ENCODE measurements at regions of chr21 and their contacts with region 1.

Region 1: GRCh38 chr21:28160378-28160777 is 832.3 kb downstream of the LTN1 start:
- DNase-seq: no peak
- H3K4me3 ChIP-seq: no peak overlapping the region
- H3K27ac ChIP-seq: no peak overlapping the region
- H3K4me1 ChIP-seq: no peaks in the 10 kb centered on the region
- H3K27me3 ChIP-seq: no peaks in the 10 kb centered on the region
- CTCF ChIP-seq: no peak

Region 2: DNA sequence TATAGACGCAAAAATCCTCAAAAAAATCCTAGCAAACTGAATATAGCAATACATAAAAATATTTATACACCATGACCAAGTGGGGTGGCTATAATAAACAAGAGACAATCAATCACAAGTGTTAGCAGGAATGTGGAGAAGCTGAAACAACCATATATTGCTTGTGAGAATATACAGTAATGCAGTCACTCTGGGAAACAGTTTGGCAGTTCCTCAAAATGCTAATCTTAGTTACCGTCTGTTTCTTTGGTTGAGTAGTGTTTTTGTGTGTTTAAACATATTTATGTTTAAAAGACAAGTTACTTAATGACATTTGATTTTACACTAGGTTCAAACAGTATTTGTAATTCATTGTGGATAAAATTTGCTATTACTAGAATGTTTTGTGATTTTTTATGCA is 40.3 kb after region 1 on chr21:
- CTCF ChIA-PET with region 1: no interaction called
- POLR2A ChIA-PET with region 1: no interaction called
- intact Hi-C with region 1: loop called (anchors 1 kb)
- DNase-seq: no peak
- H3K4me3 ChIP-seq: no peak overlapping the region
- H3K27ac ChIP-seq: no peak overlapping the region
- H3K4me1 ChIP-seq: no peaks in the 10 kb centered on the region
- H3K27me3 ChIP-seq: no peaks in the 10 kb centered on the region
- CTCF ChIP-seq: no peak

Region 3: DNA sequence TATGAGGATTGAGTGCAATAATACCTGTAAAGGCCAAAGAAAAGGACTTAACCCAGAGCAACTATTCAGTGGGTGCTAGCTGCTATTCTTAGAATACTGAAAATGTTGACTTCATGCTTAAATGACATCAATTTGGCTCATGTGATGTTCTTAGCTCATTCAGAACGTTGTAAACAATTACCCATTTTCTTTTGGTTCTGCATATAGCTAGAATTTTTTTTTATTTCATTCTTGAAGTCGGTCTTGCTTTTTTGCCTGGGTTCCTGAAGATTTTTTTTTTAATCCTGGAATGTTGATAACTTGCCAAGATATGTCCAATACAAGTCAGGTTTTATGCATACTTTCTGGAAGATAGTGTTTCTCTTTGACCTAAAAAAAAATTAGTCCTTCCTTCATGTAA is 60.3 kb after region 1 on chr21:
- CTCF ChIA-PET with region 1: no interaction called
- POLR2A ChIA-PET with region 1: no interaction called
- intact Hi-C with region 1: no loop called
- DNase-seq: no peak
- H3K4me3 ChIP-seq: no peak overlapping the region
- H3K27ac ChIP-seq: no peak overlapping the region
- H3K4me1 ChIP-seq: no peaks in the 10 kb centered on the region
- H3K27me3 ChIP-seq: no peaks in the 10 kb centered on the region
- CTCF ChIP-seq: no peak

Region 4: DNA sequence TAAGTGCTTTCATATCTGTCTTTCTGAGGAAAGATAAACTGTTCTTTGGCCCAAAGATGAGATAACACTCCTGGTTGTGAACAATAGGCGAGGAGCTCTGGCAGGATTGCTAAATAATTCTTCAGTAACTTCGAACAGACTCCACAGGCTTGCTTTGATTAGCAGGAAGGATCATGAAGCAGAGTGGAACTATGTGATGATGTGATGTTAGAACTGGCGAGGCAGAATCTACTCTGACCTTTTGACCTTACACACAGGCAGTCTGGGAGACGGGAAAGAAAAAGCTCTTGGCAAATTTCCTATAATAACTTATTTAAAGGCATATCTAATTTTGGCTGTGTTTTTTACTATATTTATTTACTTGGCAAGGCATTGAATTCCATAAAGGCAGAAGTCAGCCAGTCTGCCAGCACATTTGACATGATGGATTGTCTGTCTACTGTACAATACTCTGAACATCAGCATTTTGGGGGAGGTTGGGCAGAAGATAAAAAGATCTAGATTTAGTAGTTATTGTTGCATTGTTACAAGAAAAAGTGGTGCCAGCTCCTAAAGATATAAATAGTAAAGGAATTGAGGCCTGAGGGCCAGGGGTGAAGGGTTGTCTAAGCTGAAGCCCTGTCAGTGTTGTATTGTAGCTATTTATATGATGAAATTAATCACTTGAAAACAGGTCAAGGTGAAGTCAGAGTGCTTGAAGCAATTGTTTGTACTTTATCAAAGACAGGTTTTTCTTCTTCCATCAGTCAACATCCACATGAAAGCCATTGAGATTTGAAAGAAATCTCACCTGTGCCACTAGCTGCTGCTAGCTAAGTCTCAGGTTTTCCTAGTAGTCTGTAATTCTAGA is 123.5 kb after region 1 on chr21:
- CTCF ChIA-PET with region 1: no interaction called
- POLR2A ChIA-PET with region 1: no interaction called
- intact Hi-C with region 1: no loop called
- DNase-seq: no peak
- H3K4me3 ChIP-seq: no peak overlapping the region
- H3K27ac ChIP-seq: no peak overlapping the region
- H3K4me1 ChIP-seq: no peaks in the 10 kb centered on the region
- H3K27me3 ChIP-seq: no peaks in the 10 kb centered on the region
- CTCF ChIP-seq: no peak

Region 5: GRCh38 chr21:28357743-28358142 is 197.4 kb after region 1 on chr21:
- CTCF ChIA-PET with region 1: no interaction called
- POLR2A ChIA-PET with region 1: no interaction called
- intact Hi-C with region 1: no loop called
- DNase-seq: no peak
- H3K4me3 ChIP-seq: no peak overlapping the region
- H3K27ac ChIP-seq: no peak overlapping the region
- H3K4me1 ChIP-seq: no peaks in the 10 kb centered on the region
- H3K27me3 ChIP-seq: no peaks in the 10 kb centered on the region
- CTCF ChIP-seq: no peak